ENCODE measurements at regions of chr6 and their contacts with region 1.

Region 1: DNA sequence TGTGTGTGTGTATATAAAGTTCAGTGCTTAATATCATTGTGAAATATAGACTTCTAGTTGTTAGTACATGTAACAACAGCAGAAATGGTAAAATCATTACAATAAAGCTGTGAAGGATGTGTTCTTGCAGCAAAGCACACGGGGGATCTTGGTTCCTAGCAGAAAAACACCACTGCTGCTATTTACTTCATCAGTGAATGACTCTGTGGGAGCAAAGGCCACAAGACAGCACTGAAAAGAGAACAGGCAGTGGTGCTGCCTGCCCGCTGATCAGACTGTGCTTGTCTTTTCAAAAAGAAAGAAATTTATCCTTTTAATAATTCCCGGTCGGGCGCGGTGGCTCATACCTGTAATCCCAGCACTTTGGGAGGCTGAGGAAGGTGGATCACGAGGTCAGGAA is 689.9 kb upstream of the CITED2 start:
- DNase-seq: no peak
- CTCF ChIP-seq: no peak

Region 2: GRCh38 chr6:139981768-139982181 is 82.6 kb before region 1 on chr6:
- CTCF ChIA-PET with region 1: no interaction called
- POLR2A ChIA-PET with region 1: no interaction called
- DNase-seq: no peak
- CTCF ChIP-seq: no peak

Region 3: DNA sequence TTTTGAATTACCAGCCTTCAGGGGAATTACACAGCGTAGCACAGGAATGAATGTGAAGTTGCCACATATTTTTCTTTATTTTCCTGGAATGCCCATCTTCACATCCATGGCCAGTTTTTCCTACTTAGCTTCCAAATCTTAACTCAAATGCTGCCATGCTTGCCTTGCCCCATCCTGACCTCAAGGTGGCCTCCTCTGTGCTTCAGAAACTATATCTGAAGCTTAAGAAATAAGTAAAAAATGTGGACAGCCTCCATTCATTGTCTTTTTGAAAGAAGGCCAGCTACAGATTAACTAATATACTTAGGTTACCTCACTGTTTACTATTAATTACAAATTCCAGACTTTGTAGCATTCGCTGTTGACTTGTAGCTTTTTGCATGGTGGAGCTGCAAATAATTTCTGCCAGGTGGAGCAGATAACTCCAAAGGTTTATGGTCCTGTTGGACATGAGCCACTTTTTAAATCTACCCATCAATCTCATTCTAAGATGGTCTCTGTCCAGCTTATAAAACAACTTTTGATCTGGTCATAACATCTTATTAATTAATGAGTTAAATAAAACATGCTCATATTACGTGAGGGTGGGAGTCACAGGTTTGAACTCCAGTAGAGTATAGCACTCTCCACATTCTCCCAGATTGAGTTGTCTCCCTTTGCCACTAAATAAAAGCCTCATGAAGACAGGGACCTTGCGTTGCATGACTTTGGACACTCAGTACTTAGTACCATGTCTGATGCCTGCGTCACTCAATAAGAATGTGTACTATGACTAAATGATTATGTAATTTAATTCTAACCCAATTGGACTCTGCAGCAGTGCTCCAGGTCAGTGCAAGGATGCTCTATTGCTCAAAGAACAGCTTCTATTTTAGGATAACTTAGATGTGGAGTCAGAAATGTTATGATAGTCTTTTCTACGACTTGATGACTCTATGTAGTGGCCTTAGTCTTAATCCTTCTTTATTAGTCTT is 11.3 kb before region 1 on chr6:
- CTCF ChIA-PET with region 1: interaction called, 12 read pairs
- POLR2A ChIA-PET with region 1: no interaction called
- DNase-seq: no peak
- CTCF ChIP-seq: peak; percentile 32

Measured in GM10248 (cell line).